AG04449 (cell line): ENCODE measurements at regions of chr9 and their contacts with region 1.

Region 1: GRCh38 chr9:133375724-133376654 is at the starts of genes STKLD1 and SURF4:
- DNase-seq: peak; percentile 50
- H3K4me3 ChIP-seq: peak within 1 kb of the TSS; percentile 83
- CTCF ChIP-seq: no peak

Region 2: GRCh38 chr9:133347985-133348717 is 27.8 kb before region 1 on chr9 and contains the starts of genes MED22 and RPL7A:
- CTCF ChIA-PET with region 1: interaction called, 3 read pairs
- POLR2A ChIA-PET with region 1: interaction called, 13 read pairs
- DNase-seq: peak; percentile 73
- H3K4me3 ChIP-seq: peak within 1 kb of the TSS; percentile 96
- CTCF ChIP-seq: no peak

Region 3: GRCh38 chr9:133356391-133357091 is 19.4 kb before region 1 on chr9 and contains the starts of genes SURF1 and SURF2:
- CTCF ChIA-PET with region 1: interaction called, 14 read pairs
- POLR2A ChIA-PET with region 1: interaction called, 18 read pairs
- DNase-seq: no peak
- H3K4me3 ChIP-seq: peak within 1 kb of the TSS; percentile 84
- CTCF ChIP-seq: no peak